AG04450 (cell line): ENCODE measurements at regions of chr7 and their contacts with region 1.

Region 1: DNA sequence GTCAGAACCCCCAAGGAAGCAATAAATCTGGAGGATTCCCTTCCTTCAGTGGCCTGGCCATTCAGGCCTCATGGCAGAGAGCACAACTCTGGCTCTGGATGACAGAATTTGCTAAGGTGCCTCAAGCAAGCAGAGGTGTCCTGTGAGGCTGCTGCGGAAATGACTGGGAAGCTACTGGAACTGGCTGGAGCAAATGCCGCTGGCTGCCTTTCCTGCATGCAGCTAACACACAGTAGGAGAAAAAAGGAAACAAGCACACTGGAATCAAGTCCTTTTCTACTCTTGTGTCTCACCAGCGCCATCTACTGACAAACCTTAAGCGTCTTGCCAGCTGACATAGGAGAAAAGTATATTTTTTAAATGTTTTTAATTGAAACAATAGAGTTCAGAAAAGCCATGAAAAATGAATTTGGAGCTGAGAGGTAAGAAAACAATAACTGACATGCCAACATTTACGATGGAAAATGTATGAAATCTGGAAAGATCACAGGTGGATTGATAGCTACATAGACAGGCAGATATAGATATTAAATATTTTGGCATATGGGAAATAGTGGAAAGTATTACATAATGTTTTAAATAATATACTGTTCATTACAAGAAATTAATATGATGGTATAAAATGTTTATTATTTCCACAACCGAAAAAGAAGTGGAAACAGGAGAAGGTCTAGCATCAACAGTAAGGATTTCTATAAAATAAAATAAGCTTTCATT is 951.6 kb downstream of the ANKRD7 start:
- DNase-seq: peak; percentile 1
- H3K4me3 ChIP-seq: no peak overlapping the region
- H3K27ac ChIP-seq: no peak overlapping the region
- H3K27me3 ChIP-seq: no peaks in the 10 kb centered on the region
- CTCF ChIP-seq: peak; percentile 68

Region 2: GRCh38 chr7:118855290-118855689 is 320.8 kb before region 1 on chr7:
- CTCF ChIA-PET with region 1: no interaction called
- POLR2A ChIA-PET with region 1: no interaction called
- DNase-seq: no peak
- H3K4me3 ChIP-seq: no peak overlapping the region
- H3K27ac ChIP-seq: no peak overlapping the region
- H3K27me3 ChIP-seq: no peaks in the 10 kb centered on the region
- CTCF ChIP-seq: no peak

Region 3: DNA sequence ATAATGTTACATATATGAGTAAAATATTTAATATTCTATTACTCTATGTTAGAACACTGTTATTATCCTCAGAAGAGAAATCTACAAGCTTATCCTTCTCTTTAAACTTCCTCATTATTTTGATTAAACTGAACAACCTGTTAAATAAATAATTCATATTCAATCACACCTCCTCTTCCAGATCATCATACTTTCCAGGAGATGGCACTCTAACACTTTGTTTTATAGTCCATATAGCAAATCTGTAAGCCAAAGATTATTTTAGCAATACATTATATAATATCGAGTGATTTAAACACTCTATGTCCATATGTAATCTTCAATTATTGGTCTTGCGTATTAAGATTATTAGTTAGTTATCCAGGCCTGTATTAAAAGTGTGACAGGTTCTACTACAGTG is 257.5 kb before region 1 on chr7:
- CTCF ChIA-PET with region 1: interaction called, 14 read pairs
- POLR2A ChIA-PET with region 1: no interaction called
- DNase-seq: no peak
- H3K4me3 ChIP-seq: no peak overlapping the region
- H3K27ac ChIP-seq: no peak overlapping the region
- H3K27me3 ChIP-seq: no peaks in the 10 kb centered on the region
- CTCF ChIP-seq: 0 out of 2 replicates have a peak, but pooled peaks have one; percentile 16

Region 4: DNA sequence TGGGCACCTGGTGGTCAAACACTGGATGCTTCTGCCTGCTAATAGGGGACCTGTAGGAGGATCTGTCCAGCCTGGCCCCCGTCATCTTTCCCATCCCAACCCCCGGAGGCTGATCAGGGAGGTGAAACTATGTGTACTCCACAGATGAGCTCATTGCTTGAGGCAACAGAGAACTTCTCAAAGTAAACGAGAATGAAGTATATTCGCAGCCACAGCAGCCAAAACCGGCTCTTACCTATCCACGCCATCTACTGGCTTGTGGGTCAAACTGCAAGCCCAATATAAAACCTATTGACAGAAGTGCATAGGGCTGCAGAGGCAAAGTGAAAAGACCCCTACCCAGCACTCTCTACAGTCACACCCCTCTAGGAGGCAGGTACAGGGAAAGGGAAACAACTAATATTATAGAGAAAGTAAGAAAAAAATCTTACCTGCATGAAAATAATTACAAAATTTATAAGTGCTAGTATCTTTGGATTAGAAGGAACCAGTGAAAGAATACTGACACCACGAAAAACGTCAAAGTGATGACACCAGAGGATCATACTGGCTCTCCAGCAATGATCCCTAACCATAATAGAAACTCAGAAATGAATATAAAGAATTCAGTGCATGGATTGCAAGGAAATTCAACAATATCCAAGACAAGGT is 21.9 kb after region 1 on chr7:
- CTCF ChIA-PET with region 1: interaction called, 10 read pairs
- POLR2A ChIA-PET with region 1: no interaction called
- DNase-seq: no peak
- H3K4me3 ChIP-seq: no peak overlapping the region
- H3K27ac ChIP-seq: no peak overlapping the region
- H3K27me3 ChIP-seq: no peaks in the 10 kb centered on the region
- CTCF ChIP-seq: peak; percentile 65

Region 5: DNA sequence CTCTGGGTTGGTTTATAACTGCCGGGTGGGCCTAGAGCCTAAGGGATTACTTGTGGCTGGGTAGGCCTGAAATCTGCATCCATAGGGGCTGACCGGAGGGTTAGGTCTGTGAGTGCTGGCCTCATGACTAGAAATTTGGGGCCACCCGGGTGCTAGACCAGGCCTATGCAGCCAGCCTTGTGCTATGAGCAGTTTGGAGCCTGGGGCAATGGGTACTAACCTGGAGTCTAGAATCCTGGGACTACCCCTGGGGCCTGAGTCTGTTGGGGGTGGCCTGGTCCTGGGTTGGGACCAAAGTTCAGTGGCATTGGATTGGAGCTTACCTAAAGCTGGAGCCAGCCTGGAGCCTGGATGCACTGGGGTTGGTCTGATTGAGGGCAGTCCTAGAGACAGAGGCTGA is 43.6 kb after region 1 on chr7:
- CTCF ChIA-PET with region 1: no interaction called
- POLR2A ChIA-PET with region 1: no interaction called
- DNase-seq: no peak
- H3K4me3 ChIP-seq: no peak overlapping the region
- H3K27ac ChIP-seq: no peak overlapping the region
- H3K27me3 ChIP-seq: no peaks in the 10 kb centered on the region
- CTCF ChIP-seq: no peak